ENCODE measurements at regions of chr5 and their contacts with region 1.

Region 1: DNA sequence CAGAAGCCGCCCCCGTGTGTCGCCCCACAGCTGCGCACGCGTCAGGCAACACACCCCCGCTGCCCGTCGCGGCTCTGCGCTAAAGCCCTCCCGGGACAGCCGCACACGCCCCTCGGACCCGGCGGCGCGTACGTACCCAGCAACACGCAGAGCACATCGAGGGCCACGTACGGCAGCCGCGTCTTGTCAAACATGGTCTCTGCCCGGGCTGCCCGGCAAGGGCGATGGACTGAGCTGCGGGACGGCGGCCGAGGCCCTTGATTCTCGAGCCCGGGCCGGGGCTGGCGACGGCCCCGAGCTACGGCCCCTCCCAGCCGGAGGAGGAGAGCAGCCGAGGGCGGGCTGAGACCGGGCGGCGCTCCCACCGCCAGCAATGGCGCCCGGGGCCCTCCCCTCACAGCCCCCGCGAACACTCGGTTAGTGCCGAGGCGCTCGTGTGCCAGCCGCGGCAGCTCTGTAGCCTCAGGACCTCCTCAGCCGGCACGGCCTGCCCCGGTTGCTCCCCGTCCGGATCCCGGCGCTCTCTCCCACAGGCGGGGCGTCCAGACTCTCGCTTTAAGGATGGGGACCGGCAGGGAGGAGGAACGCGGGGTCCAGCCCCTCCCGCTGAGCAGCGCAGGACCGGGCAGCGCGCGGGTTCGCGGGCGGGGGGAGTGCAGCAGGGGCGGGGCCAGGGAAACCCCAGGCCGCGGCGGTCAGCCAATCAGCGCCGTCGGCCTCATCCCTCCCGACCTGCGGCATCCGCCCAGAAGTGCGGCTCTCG is at the start of gene PLPP1:
- DNase-seq: peak; percentile 92
- ATAC-seq: peak; percentile 78
- H3K4me3 ChIP-seq: peak within 1 kb of the TSS; percentile 71 to 93 (median 89)
- H3K4me3 Mint-ChIP-seq: peak within 1 kb of the TSS; percentile 98
- H3K27ac ChIP-seq: peak within 1 kb of the TSS; percentile 88 to 92
- H3K27ac Mint-ChIP-seq: peak within 1 kb of the TSS; percentile 96
- H3K4me1 ChIP-seq: peaks cover 18 to 23% of the 10 kb centered on the region in 2 donors
- H3K4me1 Mint-ChIP-seq: peaks cover 24% of the 10 kb centered on the region
- H3K27me3 ChIP-seq: no peaks in the 10 kb centered on the region
- H3K27me3 Mint-ChIP-seq: no peaks in the 10 kb centered on the region
- CTCF ChIP-seq: no peak
- total RNA-seq, gene PLPP1: 8.8 and 11.2 TPM in 2 replicates

Region 2: GRCh38 chr5:55278778-55279177 is 255.8 kb before region 1 on chr5:
- CTCF ChIA-PET with region 1: no interaction called
- POLR2A ChIA-PET with region 1: no interaction called
- intact Hi-C with region 1: no loop called
- DNase-seq: no peak
- ATAC-seq: no peak
- H3K4me3 ChIP-seq: no peak overlapping the region
- H3K4me3 Mint-ChIP-seq: no peak overlapping the region
- H3K27ac ChIP-seq: no peak overlapping the region
- H3K27ac Mint-ChIP-seq: no peak overlapping the region
- H3K4me1 ChIP-seq: no peaks in the 10 kb centered on the region
- H3K4me1 Mint-ChIP-seq: no peaks in the 10 kb centered on the region
- H3K27me3 ChIP-seq: no peaks in the 10 kb centered on the region
- H3K27me3 Mint-ChIP-seq: no peaks in the 10 kb centered on the region
- CTCF ChIP-seq: no peak

Region 3: DNA sequence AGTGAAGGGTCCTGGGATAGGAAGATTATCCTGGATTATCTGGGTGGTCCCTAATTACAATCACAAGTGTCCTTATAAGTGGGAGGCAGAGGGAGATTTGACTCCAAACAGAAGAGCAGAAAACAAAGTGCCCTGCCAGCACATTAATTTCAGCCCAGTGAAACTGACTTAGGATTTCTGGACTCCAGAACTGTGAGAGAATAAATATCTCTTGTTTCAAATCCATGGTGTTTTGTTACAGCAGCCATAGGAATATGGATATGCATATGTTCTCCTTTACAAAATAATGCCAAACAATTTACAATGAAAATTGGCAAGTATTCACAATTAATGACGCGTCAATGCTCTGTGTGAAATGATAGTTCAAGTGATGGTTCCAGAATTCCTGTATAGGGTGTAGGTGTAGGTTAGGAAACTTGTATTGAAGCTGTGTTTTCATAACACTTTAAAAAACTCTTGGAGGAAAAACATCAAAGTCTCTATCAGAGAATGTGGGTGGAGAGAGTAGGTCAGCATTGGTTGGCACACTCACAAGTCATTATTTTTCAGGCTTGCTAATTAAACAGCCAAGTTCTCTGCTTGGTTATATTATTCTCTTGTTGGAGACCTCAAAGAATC is 20.1 kb after region 1 on chr5:
- CTCF ChIA-PET with region 1: no interaction called
- POLR2A ChIA-PET with region 1: no interaction called
- intact Hi-C with region 1: no loop called
- DNase-seq: no peak
- ATAC-seq: no peak
- H3K4me3 ChIP-seq: no peak overlapping the region
- H3K4me3 Mint-ChIP-seq: no peak overlapping the region
- H3K27ac ChIP-seq: no peak overlapping the region
- H3K27ac Mint-ChIP-seq: no peak overlapping the region
- H3K4me1 ChIP-seq: no peaks in the 10 kb centered on the region
- H3K4me1 Mint-ChIP-seq: no peaks in the 10 kb centered on the region
- H3K27me3 ChIP-seq: peaks cover 0 to 2% (median 0%) of the 10 kb centered on the region in 4 experiments
- H3K27me3 Mint-ChIP-seq: peaks cover 22% of the 10 kb centered on the region
- CTCF ChIP-seq: no peak

Region 4: GRCh38 chr5:55578771-55579170 is 44.2 kb after region 1 on chr5:
- CTCF ChIA-PET with region 1: no interaction called
- POLR2A ChIA-PET with region 1: no interaction called
- intact Hi-C with region 1: no loop called
- DNase-seq: no peak
- ATAC-seq: no peak
- H3K4me3 ChIP-seq: no peak overlapping the region
- H3K4me3 Mint-ChIP-seq: no peak overlapping the region
- H3K27ac ChIP-seq: no peak overlapping the region
- H3K27ac Mint-ChIP-seq: no peak overlapping the region
- H3K4me1 ChIP-seq: peaks cover 3 to 4% of the 10 kb centered on the region in 2 donors
- H3K4me1 Mint-ChIP-seq: peaks cover 8% of the 10 kb centered on the region
- H3K27me3 ChIP-seq: no peaks in the 10 kb centered on the region
- H3K27me3 Mint-ChIP-seq: no peaks in the 10 kb centered on the region
- CTCF ChIP-seq: no peak

Region 5: GRCh38 chr5:55711968-55712859 is 177.6 kb after region 1 on chr5 and contains the start of gene SLC38A9:
- CTCF ChIA-PET with region 1: no interaction called
- POLR2A ChIA-PET with region 1: no interaction called
- intact Hi-C with region 1: loop called (anchors 1 kb)
- DNase-seq: peak; percentile 93
- ATAC-seq: peak; percentile 100
- H3K4me3 ChIP-seq: peak within 1 kb of the TSS; percentile 80 to 96 (median 94)
- H3K4me3 Mint-ChIP-seq: peak within 1 kb of the TSS; percentile 100
- H3K27ac ChIP-seq: peak within 1 kb of the TSS; percentile 49 to 74
- H3K27ac Mint-ChIP-seq: peak within 1 kb of the TSS; percentile 93
- H3K4me1 ChIP-seq: peaks cover 11 to 19% of the 10 kb centered on the region in 2 donors
- H3K4me1 Mint-ChIP-seq: peaks cover 19% of the 10 kb centered on the region
- H3K27me3 ChIP-seq: no peaks in the 10 kb centered on the region
- H3K27me3 Mint-ChIP-seq: no peaks in the 10 kb centered on the region
- CTCF ChIP-seq: no peak
- total RNA-seq, gene SLC38A9: 36.3 and 43.5 TPM in 2 replicates

Measured in B cell (primary cell).